Tibial artery (tissue), 4 donors: ENCODE measurements at regions of chr4 and their contacts with region 1.

Region 1: GRCh38 chr4:99161373-99162099 is 17.4 kb upstream of the ADH4 start:
- DNase-seq: no peak
- H3K4me3 ChIP-seq: no peak overlapping the region
- H3K27ac ChIP-seq: no peak overlapping the region
- H3K4me1 ChIP-seq: no peaks in the 10 kb centered on the region
- H3K27me3 ChIP-seq: no peaks in the 10 kb centered on the region
- CTCF ChIP-seq: no peak

Region 2: GRCh38 chr4:99179588-99179987 is 18.1 kb after region 1 on chr4:
- intact Hi-C with region 1: loop called (anchors 2 kb)
- DNase-seq: no peak
- H3K4me3 ChIP-seq: no peak overlapping the region
- H3K27ac ChIP-seq: no peak overlapping the region
- H3K4me1 ChIP-seq: peaks cover 0 to 11% (median 0%) of the 10 kb centered on the region in 4 donors
- H3K27me3 ChIP-seq: no peaks in the 10 kb centered on the region
- CTCF ChIP-seq: no peak

Region 3: GRCh38 chr4:99321241-99322191 is 160.0 kb after region 1 on chr4 and contains the start of gene ADH1B:
- intact Hi-C with region 1: no loop called
- DNase-seq: peak in 1 of 2 donors; percentile 69
- H3K4me3 ChIP-seq: peak within 1 kb of the TSS; percentile 43 to 50
- H3K27ac ChIP-seq: peak within 1 kb of the TSS; percentile 78 to 79
- H3K4me1 ChIP-seq: peaks cover 0 to 86% (median 19%) of the 10 kb centered on the region in 4 donors
- H3K27me3 ChIP-seq: no peaks in the 10 kb centered on the region
- CTCF ChIP-seq: no peak

Region 4: GRCh38 chr4:99510721-99511120 is 349.2 kb after region 1 on chr4 and contains the start of gene C4orf17:
- intact Hi-C with region 1: no loop called
- DNase-seq: no peak
- H3K4me3 ChIP-seq: no peak within 1 kb of the TSS
- H3K27ac ChIP-seq: no peak within 1 kb of the TSS
- H3K4me1 ChIP-seq: no peaks in the 10 kb centered on the region
- H3K27me3 ChIP-seq: no peaks in the 10 kb centered on the region
- CTCF ChIP-seq: no peak